ENCODE measurements at regions of chr16 and their contacts with region 1.

Region 1: GRCh38 chr16:6643080-6643686 is 689.5 kb upstream of the RBFOX1 start:
- DNase-seq: no peak
- ATAC-seq: no peak

Region 2: GRCh38 chr16:5234295-5235050 is 1408.7 kb before region 1 on chr16:
- intact Hi-C with region 1: loop called (anchors 10 kb)
- DNase-seq: no peak
- ATAC-seq: no peak

Region 3: GRCh38 chr16:5756969-5757368 is 886.2 kb before region 1 on chr16:
- intact Hi-C with region 1: loop called (anchors 10 kb)
- DNase-seq: no peak
- ATAC-seq: no peak

Measured in Right ventricle myocardium inferior (tissue), 1 donor.